CD14-positive monocyte (primary cell): ENCODE measurements at regions of chr11 and their contacts with region 1.

Region 1: GRCh38 chr11:78645226-78646202 is 70.8 kb upstream of the NARS2 start:
- DNase-seq: peak; percentile 27 to 61 (median 55)
- H3K4me3 ChIP-seq: no peak overlapping the region
- H3K4me3 Mint-ChIP-seq: no peak overlapping the region
- H3K27ac ChIP-seq: no peak overlapping the region
- H3K27ac Mint-ChIP-seq: no peak overlapping the region
- H3K4me1 ChIP-seq: no peaks in the 10 kb centered on the region
- H3K4me1 Mint-ChIP-seq: peaks cover 2% of the 10 kb centered on the region
- H3K27me3 ChIP-seq: no peaks in the 10 kb centered on the region
- H3K27me3 Mint-ChIP-seq: peaks cover 2 to 14% (median 8%) of the 10 kb centered on the region in 3 donors
- CTCF ChIP-seq: peak; percentile 96

Region 2: GRCh38 chr11:78851878-78852586 is 206.5 kb after region 1 on chr11:
- intact Hi-C with region 1: no loop called
- DNase-seq: peak; percentile 29 to 72 (median 39)
- H3K4me3 ChIP-seq: no peak overlapping the region
- H3K4me3 Mint-ChIP-seq: peak overlapping the region in 1 of 2 donors; percentile 40
- H3K27ac ChIP-seq: peak overlapping the region; percentile 60 to 78
- H3K27ac Mint-ChIP-seq: peak overlapping the region in 6 of 7 donors; percentile 1 to 95 (median 78)
- H3K4me1 ChIP-seq: peaks cover 19 to 20% of the 10 kb centered on the region in 2 donors
- H3K4me1 Mint-ChIP-seq: peaks cover 6% of the 10 kb centered on the region
- H3K27me3 ChIP-seq: peaks cover 13 to 19% of the 10 kb centered on the region in 2 donors
- H3K27me3 Mint-ChIP-seq: peaks cover 9 to 24% (median 16%) of the 10 kb centered on the region in 3 donors
- CTCF ChIP-seq: no peak

Region 3: GRCh38 chr11:78961247-78961646 is 315.7 kb after region 1 on chr11:
- intact Hi-C with region 1: loop called in 1 of 2 experiments (anchors 10 kb)
- DNase-seq: peak; percentile 12 to 37 (median 16)
- H3K4me3 ChIP-seq: no peak overlapping the region
- H3K4me3 Mint-ChIP-seq: peak overlapping the region in 1 of 2 donors; percentile 68
- H3K27ac ChIP-seq: no peak overlapping the region
- H3K27ac Mint-ChIP-seq: no peak overlapping the region
- H3K4me1 ChIP-seq: no peaks in the 10 kb centered on the region
- H3K4me1 Mint-ChIP-seq: no peaks in the 10 kb centered on the region
- H3K27me3 ChIP-seq: peaks cover 31 to 63% of the 10 kb centered on the region in 2 donors
- H3K27me3 Mint-ChIP-seq: peaks cover 46 to 80% (median 50%) of the 10 kb centered on the region in 3 donors
- CTCF ChIP-seq: peak; percentile 18

Region 4: GRCh38 chr11:79076526-79077115 is 431.1 kb after region 1 on chr11:
- intact Hi-C with region 1: loop called (anchors 2 to 5 kb)
- DNase-seq: peak in 2 of 3 donors; percentile 4 to 32
- H3K4me3 ChIP-seq: no peak overlapping the region
- H3K4me3 Mint-ChIP-seq: no peak overlapping the region
- H3K27ac ChIP-seq: no peak overlapping the region
- H3K27ac Mint-ChIP-seq: no peak overlapping the region
- H3K4me1 ChIP-seq: no peaks in the 10 kb centered on the region
- H3K4me1 Mint-ChIP-seq: no peaks in the 10 kb centered on the region
- H3K27me3 ChIP-seq: no peaks in the 10 kb centered on the region
- H3K27me3 Mint-ChIP-seq: peaks cover 5 to 7% (median 5%) of the 10 kb centered on the region in 3 donors
- CTCF ChIP-seq: peak; percentile 69

Region 5: GRCh38 chr11:79493555-79494171 is 848.1 kb after region 1 on chr11:
- intact Hi-C with region 1: loop called (anchors 5 to 10 kb)
- DNase-seq: peak; percentile 30 to 43 (median 40)
- H3K4me3 ChIP-seq: no peak overlapping the region
- H3K4me3 Mint-ChIP-seq: no peak overlapping the region
- H3K27ac ChIP-seq: no peak overlapping the region
- H3K27ac Mint-ChIP-seq: no peak overlapping the region
- H3K4me1 ChIP-seq: no peaks in the 10 kb centered on the region
- H3K4me1 Mint-ChIP-seq: peaks cover 2% of the 10 kb centered on the region
- H3K27me3 ChIP-seq: peaks cover 2 to 9% of the 10 kb centered on the region in 2 donors
- H3K27me3 Mint-ChIP-seq: peaks cover 0 to 13% (median 3%) of the 10 kb centered on the region in 3 donors
- CTCF ChIP-seq: peak; percentile 89